Mammary epithelial cell (primary cell): ENCODE measurements at regions of chrX and their contacts with region 1.

Region 1: GRCh38 chrX:45801554-45801953 is 600.9 kb upstream of the DIPK2B start:
- DNase-seq: peak; percentile 50
- H3K4me3 ChIP-seq: peak overlapping the region in 1 of 3 experiments; percentile 40
- H3K27ac ChIP-seq: peak overlapping the region; percentile 91
- H3K4me1 ChIP-seq: peaks cover 48% of the 10 kb centered on the region
- H3K27me3 ChIP-seq: no peaks in the 10 kb centered on the region
- CTCF ChIP-seq: peak; percentile 39 to 52

Region 2: DNA sequence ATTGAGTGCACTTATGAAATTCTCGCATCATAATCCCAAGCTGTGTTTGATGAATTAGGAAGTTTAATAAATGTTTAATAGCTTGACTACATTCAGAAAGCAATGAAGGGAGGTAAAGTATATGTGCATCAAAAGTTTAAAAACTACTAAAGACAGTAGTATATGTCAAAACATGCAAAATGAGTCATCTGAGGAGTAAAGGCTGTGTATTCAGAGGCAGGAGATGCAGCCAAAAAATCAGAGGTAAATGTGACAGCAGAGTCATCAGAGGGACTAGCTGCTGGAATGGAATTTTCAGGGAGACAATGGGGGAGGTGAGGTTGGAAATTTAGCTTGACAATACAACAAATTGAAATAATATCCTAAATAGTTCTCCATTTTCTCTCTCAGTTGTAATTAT is 1131.9 kb before region 1 on chrX:
- CTCF ChIA-PET with region 1: no interaction called
- dilution Hi-C with region 1: no loop called
- in situ Hi-C with region 1: no loop called
- intact Hi-C with region 1: no loop called
- DNase-seq: peak; percentile 24
- H3K4me3 ChIP-seq: no peak overlapping the region
- H3K27ac ChIP-seq: no peak overlapping the region
- H3K4me1 ChIP-seq: peaks cover 11% of the 10 kb centered on the region
- H3K27me3 ChIP-seq: no peaks in the 10 kb centered on the region
- CTCF ChIP-seq: no peak

Region 3: DNA sequence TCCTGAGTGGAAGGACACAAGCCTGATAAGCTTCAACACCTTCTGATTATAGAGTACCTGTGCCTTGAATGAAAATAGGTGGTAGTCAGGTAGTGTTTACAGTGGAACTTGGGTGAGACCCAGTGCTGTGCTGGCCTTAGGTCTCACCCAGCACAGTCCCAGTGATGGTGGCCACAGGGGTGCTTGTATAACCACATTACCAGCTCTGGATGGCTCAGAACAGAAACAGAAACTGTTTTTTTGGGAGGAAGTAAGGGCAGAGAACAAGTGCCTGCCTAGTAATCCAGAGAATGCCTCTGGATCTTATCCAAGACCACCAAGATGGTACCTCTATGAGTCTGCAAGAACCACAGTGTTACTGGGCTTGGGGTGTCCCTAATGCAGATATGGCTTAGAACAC is 429.4 kb before region 1 on chrX:
- CTCF ChIA-PET with region 1: no interaction called
- dilution Hi-C with region 1: no loop called
- in situ Hi-C with region 1: no loop called
- intact Hi-C with region 1: no loop called
- DNase-seq: no peak
- H3K4me3 ChIP-seq: no peak overlapping the region
- H3K27ac ChIP-seq: no peak overlapping the region
- H3K4me1 ChIP-seq: no peaks in the 10 kb centered on the region
- H3K27me3 ChIP-seq: no peaks in the 10 kb centered on the region
- CTCF ChIP-seq: no peak

Region 4: GRCh38 chrX:45788941-45789348 is 12.6 kb before region 1 on chrX:
- CTCF ChIA-PET with region 1: no interaction called
- dilution Hi-C with region 1: no loop called
- in situ Hi-C with region 1: no loop called
- intact Hi-C with region 1: loop called (anchors 1 kb)
- DNase-seq: peak; percentile 45
- H3K4me3 ChIP-seq: no peak overlapping the region
- H3K27ac ChIP-seq: peak overlapping the region; percentile 74
- H3K4me1 ChIP-seq: peaks cover 55% of the 10 kb centered on the region
- H3K27me3 ChIP-seq: no peaks in the 10 kb centered on the region
- CTCF ChIP-seq: no peak

Region 5: DNA sequence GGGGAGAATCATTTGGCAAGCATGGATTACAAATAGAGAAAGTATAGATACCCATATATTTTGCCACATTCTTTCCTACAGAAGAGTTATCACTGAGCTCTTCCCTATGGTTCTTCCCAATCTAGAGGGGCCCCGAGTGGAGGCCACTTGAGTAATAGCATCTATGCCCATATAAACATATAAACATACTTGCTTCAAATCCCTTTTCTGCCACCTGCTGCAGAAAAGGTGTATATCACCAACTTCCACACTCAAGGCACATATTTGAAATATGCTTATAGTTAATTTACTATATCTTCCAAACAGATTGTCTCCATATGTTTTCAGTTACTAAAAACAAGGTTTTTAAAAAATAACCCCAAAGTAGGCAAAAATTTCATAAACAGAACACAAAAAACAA is 42.0 kb after region 1 on chrX:
- CTCF ChIA-PET with region 1: interaction called, 8 read pairs
- dilution Hi-C with region 1: no loop called
- in situ Hi-C with region 1: no loop called
- intact Hi-C with region 1: loop called (anchors 1 kb)
- DNase-seq: no peak
- H3K4me3 ChIP-seq: no peak overlapping the region
- H3K27ac ChIP-seq: no peak overlapping the region
- H3K4me1 ChIP-seq: peaks cover 42% of the 10 kb centered on the region
- H3K27me3 ChIP-seq: no peaks in the 10 kb centered on the region
- CTCF ChIP-seq: peak; percentile 2 to 43